Transverse colon (tissue), 4 donors: ENCODE measurements at regions of chr6 and their contacts with region 1.

Region 1: DNA sequence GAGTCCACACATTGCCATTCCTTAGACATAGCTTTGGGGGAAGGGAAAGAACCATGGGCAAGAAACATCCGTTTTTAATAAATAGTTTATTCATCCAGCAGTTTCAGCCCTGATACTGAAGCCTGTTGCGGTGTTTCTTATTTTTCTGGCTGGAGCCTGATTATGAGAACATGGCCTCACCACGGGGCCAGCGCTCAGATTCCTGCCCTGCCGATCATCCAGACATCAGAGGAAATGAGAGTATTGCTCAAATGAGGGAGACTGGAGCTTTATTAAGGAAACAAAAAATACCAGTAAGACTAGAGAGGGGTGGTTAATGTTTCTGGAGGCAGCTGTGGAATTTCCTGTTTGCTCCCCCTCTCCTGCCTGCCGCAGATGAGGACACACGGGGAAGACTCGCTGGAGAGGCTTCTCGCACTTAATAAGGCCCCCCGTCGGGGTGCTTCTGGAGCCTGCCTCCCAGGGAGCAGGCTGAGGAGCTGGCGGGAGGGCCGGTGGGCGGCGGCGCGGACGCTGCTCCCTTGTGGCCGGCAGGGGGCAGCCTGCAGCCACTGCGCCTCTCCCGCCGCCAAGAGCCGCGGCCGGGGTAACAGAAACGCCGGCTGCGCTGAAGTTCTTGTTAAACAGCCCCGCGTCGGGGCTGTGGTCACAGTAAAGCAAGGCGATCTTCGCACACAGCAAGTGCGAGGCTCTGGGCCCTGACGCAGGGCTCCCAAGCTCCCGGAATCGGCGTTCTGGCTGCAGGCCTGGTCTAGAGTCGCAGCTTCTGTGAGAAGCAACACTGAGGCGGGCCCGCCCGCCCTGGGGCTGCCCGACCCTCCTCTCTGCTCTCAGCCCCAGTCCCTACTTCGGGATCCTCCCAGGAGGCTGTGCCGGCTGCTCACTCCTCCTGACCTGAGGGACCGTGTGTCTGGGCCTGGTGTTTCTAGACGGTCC is 17.5 kb downstream of the LEMD2 start:
- DNase-seq: peak; percentile 69
- H3K4me3 ChIP-seq: no peak overlapping the region
- H3K27ac ChIP-seq: peak overlapping the region; percentile 48 to 75 (median 64)
- H3K4me1 ChIP-seq: peaks cover 17 to 34% (median 23%) of the 10 kb centered on the region in 4 donors
- H3K27me3 ChIP-seq: no peaks in the 10 kb centered on the region
- CTCF ChIP-seq: peak; percentile 86 to 98 (median 96)
- EP300 ChIP-seq: no peak
- POLR2A ChIP-seq: no peak

Region 2: DNA sequence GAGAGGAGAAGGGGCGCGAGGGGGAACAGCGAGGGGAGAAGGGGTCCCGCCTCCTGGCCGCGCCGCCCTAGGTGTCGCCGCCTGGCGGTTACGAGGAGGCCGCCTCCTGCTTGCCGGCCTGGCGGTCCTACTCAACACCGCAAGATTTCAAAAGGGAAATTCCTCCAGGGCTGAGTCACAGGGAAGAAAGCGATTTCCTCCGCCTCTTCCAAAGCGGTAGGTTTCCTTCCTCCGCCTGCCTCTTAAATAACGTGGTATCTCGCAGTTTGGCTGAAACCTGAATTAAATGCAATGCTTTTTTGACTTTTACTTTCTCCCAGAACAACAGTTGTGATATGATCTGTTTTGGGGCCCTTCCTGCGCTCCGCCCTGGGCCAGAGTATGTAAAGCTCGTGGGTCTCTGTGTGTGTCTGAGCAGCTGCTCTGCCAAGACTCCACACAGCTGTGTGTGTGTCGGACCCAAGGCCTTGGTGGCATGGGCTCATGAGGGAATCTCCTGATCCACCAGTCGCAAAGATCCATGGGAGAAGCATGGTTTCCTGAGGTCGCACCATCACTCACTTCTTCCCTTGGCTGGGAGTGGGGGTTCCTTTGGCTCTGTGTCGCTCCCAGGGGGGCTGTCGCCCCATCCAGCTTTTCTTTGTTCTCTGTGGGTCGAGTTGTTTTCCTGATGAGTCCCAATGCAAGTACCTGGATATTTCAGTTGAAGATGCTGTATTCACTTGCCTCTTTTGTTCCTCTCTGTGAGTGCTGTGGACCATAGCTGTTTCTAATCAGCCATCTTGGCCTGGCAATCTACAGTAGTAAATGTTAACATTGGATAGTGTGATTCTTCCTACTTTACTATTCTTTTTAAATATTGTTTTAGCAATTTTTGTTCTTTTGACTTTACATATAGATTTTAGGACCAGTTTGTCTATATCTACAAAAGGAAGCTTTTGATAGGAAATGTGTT is 1515.9 kb before region 1 on chr6:
- in situ Hi-C with region 1: no loop called
- intact Hi-C with region 1: no loop called
- DNase-seq: peak; percentile 55
- H3K4me3 ChIP-seq: peak overlapping the region in 3 of 4 donors; percentile 10 to 44 (median 23)
- H3K27ac ChIP-seq: peak overlapping the region; percentile 69 to 76 (median 73)
- H3K4me1 ChIP-seq: peaks cover 0 to 10% (median 2%) of the 10 kb centered on the region in 4 donors
- H3K27me3 ChIP-seq: peaks cover 24% of the 10 kb centered on the region
- CTCF ChIP-seq: peak; percentile 46 to 66 (median 60)
- EP300 ChIP-seq: no peak
- POLR2A ChIP-seq: no peak

Region 3: DNA sequence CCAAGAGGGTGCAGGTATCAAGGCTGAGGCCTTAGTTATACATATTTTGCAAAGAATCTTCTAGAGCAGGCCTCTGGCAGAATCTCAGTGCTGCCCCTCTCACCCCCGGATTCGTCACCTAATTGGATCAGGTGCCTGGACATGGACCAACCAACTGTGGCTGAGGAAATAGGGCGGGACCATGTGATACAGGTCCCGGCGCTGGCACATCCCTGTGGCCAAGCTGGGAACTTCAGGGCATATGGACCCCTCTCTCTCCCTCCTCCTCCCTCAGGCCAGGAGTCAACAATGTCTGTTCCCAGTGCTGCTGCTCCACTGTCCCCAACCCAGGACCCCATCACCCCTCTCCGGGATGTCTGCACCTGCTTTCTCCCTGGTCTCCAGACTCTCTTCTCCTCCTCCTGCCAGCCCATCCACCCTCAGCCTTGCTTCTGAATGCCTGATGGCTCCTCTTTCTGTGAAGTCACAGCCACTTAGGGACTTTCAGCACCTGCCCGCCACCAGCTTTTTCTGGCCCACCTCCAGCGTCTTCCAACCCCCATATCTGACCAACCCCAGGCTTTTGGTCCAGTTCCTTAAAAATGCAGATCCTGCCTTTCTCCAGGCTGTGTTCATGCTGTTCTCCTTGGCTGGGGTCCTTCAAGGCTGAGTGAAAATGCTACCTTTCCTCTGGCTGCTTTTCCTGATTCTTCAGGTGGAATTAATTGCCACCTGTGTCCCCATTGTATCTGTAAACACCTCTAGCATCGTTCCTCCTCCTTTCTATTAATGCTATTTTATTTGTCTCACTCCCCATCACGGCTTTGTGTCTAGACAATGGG is 51.4 kb after region 1 on chr6:
- in situ Hi-C with region 1: no loop called
- intact Hi-C with region 1: no loop called
- DNase-seq: no peak
- H3K4me3 ChIP-seq: no peak overlapping the region
- H3K27ac ChIP-seq: no peak overlapping the region
- H3K4me1 ChIP-seq: peaks cover 0 to 11% (median 2%) of the 10 kb centered on the region in 4 donors
- H3K27me3 ChIP-seq: no peaks in the 10 kb centered on the region
- CTCF ChIP-seq: no peak
- EP300 ChIP-seq: no peak
- POLR2A ChIP-seq: no peak

Region 4: GRCh38 chr6:34027445-34027936 is 256.1 kb after region 1 on chr6:
- in situ Hi-C with region 1: loop called (anchors 10 to 25 kb)
- intact Hi-C with region 1: loop called (anchors 5 kb)
- DNase-seq: peak; percentile 64
- H3K4me3 ChIP-seq: no peak overlapping the region
- H3K27ac ChIP-seq: no peak overlapping the region
- H3K4me1 ChIP-seq: peaks cover 0 to 4% (median 0%) of the 10 kb centered on the region in 4 donors
- H3K27me3 ChIP-seq: no peaks in the 10 kb centered on the region
- CTCF ChIP-seq: peak; percentile 84 to 97 (median 91)
- EP300 ChIP-seq: no peak
- POLR2A ChIP-seq: no peak

Region 5: GRCh38 chr6:34036357-34037069 is 265.1 kb after region 1 on chr6:
- in situ Hi-C with region 1: loop called in 2 of 4 experiments (anchors 10 to 25 kb)
- intact Hi-C with region 1: no loop called
- DNase-seq: no peak
- H3K4me3 ChIP-seq: no peak overlapping the region
- H3K27ac ChIP-seq: no peak overlapping the region
- H3K4me1 ChIP-seq: no peaks in the 10 kb centered on the region
- H3K27me3 ChIP-seq: no peaks in the 10 kb centered on the region
- CTCF ChIP-seq: no peak
- EP300 ChIP-seq: no peak
- POLR2A ChIP-seq: no peak

Region 6: DNA sequence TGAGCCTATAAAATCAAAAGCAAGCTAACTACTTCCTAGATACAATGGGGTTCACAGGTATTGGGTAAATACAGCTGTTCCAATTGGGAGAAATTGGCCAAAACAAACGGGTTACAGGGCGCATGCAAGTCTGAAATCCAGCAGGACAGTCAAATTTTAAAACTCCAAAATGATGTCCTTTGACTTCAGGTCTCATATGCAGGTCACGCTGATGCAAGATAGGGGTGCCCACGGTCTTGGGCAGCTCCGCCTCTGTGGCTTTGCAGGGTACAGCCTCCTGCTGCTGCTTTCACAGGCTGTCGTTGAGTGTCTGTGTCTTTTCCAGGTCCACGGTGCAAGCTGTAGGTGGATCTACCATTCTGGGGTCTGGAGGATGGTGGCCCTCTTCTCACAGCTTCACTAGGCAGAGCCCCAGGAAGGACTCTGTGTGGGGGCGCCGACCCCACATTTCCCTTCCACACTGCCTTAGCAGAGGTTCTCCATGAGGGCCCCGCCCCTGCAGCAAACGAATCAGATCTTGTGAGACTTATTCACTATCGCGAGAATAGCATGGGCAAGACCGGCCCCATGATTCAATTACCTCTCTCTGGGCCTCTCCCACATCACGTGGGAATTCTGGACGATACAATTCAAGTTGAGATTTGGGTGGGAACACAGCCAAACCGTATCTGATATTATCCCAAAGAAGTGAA is 489.3 kb after region 1 on chr6:
- in situ Hi-C with region 1: no loop called
- intact Hi-C with region 1: no loop called
- DNase-seq: no peak
- H3K4me3 ChIP-seq: no peak overlapping the region
- H3K27ac ChIP-seq: no peak overlapping the region
- H3K4me1 ChIP-seq: no peaks in the 10 kb centered on the region
- H3K27me3 ChIP-seq: no peaks in the 10 kb centered on the region
- CTCF ChIP-seq: no peak
- EP300 ChIP-seq: no peak
- POLR2A ChIP-seq: no peak

Region 7: GRCh38 chr6:34425498-34426410 is 654.3 kb after region 1 on chr6 and contains the start of gene RPS10:
- in situ Hi-C with region 1: no loop called
- intact Hi-C with region 1: no loop called
- DNase-seq: peak; percentile 94
- H3K4me3 ChIP-seq: peak within 1 kb of the TSS; percentile 48 to 76 (median 60)
- H3K27ac ChIP-seq: peak within 1 kb of the TSS; percentile 82 to 88 (median 86)
- H3K4me1 ChIP-seq: peaks cover 3 to 20% (median 11%) of the 10 kb centered on the region in 4 donors
- H3K27me3 ChIP-seq: no peaks in the 10 kb centered on the region
- CTCF ChIP-seq: no peak
- EP300 ChIP-seq: no peak
- POLR2A ChIP-seq: peak; percentile 85
- total RNA-seq, gene RPS10: 892 to 1,969 (median 1,491) TPM